Mammary epithelial cell (primary cell): ENCODE measurements at regions of chr12 and their contacts with region 1.

Region 1: DNA sequence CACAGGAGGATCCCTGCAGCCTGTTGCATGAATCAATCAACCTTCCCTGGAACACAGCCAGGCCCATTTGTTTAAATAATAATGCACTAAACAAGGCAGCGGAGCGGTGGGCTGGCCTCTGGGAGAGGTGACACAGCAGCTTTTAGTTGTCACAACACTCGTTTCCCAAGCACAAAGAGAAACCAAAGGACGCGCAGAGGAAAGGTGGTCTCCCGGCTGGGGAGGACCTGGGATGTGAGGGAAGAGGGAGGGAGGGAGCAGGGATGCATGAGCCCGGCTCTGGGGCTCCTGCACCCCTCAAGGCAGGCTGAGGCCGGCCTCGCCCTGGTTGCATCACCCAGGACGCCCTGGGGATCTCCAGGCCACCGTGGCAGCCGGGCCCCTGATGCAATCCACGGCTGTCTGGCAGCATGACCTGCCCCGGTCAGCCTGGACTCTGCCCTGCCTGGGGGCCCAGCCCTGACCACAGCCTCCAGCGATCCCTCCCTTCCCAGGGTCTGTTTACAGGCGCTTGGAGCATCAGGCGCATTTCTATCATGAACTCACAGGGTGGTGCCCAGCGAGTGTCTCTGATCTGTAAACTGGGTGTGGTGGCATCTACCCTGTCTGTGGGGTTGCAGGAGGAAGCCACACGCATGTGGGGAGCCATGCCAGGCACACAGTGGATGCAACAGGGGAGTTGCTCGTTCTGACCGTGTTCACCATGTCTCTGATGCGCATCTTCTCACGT is 32.5 kb downstream of the MMP17 start:
- DNase-seq: peak; percentile 37
- H3K4me3 ChIP-seq: no peak overlapping the region
- H3K27ac ChIP-seq: peak overlapping the region; percentile 19
- H3K4me1 ChIP-seq: peaks cover 28% of the 10 kb centered on the region
- H3K27me3 ChIP-seq: no peaks in the 10 kb centered on the region
- CTCF ChIP-seq: no peak

Region 2: DNA sequence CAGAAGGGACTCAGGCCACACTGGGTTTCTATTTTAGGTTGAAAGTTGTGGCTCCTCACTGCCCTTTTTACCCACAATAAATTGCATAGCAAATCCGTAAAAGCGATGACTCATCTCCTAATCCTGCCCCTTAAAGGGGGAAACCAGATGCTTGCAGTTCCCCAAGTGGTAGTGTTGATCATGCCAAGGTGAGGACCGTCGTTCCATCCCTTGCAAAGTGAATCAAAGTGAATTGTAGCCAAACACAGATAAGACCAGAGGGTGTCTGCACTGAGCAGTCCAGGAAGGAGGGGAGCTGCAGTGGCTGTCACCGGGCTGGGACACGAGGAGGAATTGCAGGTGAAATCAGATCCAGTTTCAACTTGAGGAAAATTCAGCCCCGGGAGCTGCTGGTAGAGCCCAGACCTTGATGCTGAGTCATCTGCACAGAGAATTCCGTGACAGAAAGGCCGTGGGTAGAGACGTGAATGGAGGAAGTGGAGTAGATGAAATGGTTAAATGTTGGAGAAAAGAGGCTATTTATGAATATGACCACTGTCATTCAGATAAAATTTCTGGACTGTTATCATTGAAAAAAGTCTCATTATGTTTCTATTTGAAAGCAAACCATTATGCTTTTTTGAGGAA is 76.7 kb before region 1 on chr12:
- CTCF ChIA-PET with region 1: no interaction called
- dilution Hi-C with region 1: loop called (anchors 5 kb)
- in situ Hi-C with region 1: no loop called
- intact Hi-C with region 1: no loop called
- DNase-seq: peak; percentile 64
- H3K4me3 ChIP-seq: no peak overlapping the region
- H3K27ac ChIP-seq: peak overlapping the region; percentile 8
- H3K4me1 ChIP-seq: peaks cover 13% of the 10 kb centered on the region
- H3K27me3 ChIP-seq: no peaks in the 10 kb centered on the region
- CTCF ChIP-seq: no peak